HepG2 (cell line): ENCODE measurements at regions of chr19 and their contacts with region 1.

Region 1: GRCh38 chr19:47647804-47648141 is 38.8 kb downstream of the BICRA start:
- DNase-seq: no peak
- ATAC-seq: no peak
- H3K4me3 ChIP-seq: peak overlapping the region in 1 of 3 experiments; percentile 51; a peak in 1 of 6 replicates
- H3K27ac ChIP-seq: peak overlapping the region; percentile 78
- H3K4me1 ChIP-seq: peaks cover 24% of the 10 kb centered on the region
- H3K27me3 ChIP-seq: no peaks in the 10 kb centered on the region
- CTCF ChIP-seq: no peak
- EP300 ChIP-seq: no peak
- POLR2A ChIP-seq: no peak
- RAD21 ChIP-seq: no peak

Region 2: GRCh38 chr19:47549261-47549862 is 98.4 kb before region 1 on chr19:
- CTCF ChIA-PET with region 1: no interaction called
- POLR2A ChIA-PET with region 1: no interaction called
- in situ Hi-C with region 1: no loop called
- intact Hi-C with region 1: no loop called
- DNase-seq: no peak
- ATAC-seq: peak; percentile 28; the same call in 1 of the 3 replicates
- H3K4me3 ChIP-seq: no peak overlapping the region
- H3K27ac ChIP-seq: no peak overlapping the region
- H3K4me1 ChIP-seq: peaks cover 8% of the 10 kb centered on the region
- H3K27me3 ChIP-seq: peaks cover 0 to 10% of the 10 kb centered on the region in 2 experiments; a peak in 2 of 5 replicates
- CTCF ChIP-seq: no peak
- EP300 ChIP-seq: no peak
- POLR2A ChIP-seq: no peak
- RAD21 ChIP-seq: no peak

Region 3: DNA sequence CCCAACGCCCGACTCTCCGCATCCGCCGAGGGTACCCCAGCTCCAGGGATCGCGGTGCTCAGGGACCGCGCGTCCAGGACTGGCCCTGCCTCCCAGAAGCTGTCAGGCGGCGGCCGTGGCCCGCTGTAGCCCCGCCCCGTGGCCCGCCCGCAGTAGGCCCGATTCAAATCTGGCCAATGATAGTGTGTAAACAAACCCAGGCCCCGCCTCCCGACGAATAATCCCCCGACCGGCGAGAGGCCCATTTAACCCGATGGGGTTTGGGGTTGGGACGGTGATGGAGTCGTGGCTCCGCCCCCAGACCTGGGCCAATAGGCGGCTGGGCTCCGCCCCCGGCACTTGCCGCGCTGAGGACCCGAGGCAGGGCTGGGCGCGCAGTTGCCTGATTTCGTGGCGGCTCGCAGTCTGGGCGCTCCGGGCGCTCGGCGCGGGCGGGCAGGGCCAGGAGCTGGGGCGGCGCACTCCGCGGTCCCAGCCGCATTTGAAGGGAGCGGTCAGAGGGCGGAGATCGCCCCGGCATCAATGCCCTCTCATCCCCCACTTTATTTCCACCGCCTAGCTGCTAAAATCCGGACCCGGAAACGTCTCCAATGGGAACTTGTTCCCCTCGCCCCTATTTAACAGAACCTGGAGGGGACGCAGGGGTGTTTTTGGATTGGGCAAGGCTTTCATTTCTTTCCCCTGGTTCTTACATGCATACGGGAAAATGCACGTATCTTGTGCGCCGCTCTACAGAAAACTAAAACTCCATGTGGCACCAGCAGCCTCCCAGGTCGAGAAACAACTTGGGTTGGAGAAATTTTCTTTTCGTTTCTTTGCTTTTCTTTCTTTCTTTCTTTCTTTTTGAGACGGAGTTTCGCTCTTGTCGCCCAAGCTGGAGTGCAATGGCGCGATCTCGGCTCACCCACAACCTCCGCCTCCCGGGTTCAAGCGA is 47.3 kb before region 1 on chr19:
- CTCF ChIA-PET with region 1: no interaction called
- POLR2A ChIA-PET with region 1: interaction called, 13 read pairs
- in situ Hi-C with region 1: no loop called
- intact Hi-C with region 1: no loop called
- DNase-seq: peak; percentile 97
- ATAC-seq: peak; percentile 92
- H3K4me3 ChIP-seq: peak overlapping the region; percentile 65 to 77 (median 68)
- H3K27ac ChIP-seq: peak overlapping the region; percentile 75
- H3K4me1 ChIP-seq: peaks cover 40% of the 10 kb centered on the region
- H3K27me3 ChIP-seq: 0 out of 5 replicates have a peak, but pooled peaks cover 1 to 12% of the 10 kb centered on the region in 2 experiments
- CTCF ChIP-seq: no peak; the same call in 1 of the 2 replicates
- EP300 ChIP-seq: no peak
- POLR2A ChIP-seq: peak; percentile 71 to 82
- RAD21 ChIP-seq: 0 out of 2 replicates have a peak, but pooled peaks have one; percentile 38

Region 4: DNA sequence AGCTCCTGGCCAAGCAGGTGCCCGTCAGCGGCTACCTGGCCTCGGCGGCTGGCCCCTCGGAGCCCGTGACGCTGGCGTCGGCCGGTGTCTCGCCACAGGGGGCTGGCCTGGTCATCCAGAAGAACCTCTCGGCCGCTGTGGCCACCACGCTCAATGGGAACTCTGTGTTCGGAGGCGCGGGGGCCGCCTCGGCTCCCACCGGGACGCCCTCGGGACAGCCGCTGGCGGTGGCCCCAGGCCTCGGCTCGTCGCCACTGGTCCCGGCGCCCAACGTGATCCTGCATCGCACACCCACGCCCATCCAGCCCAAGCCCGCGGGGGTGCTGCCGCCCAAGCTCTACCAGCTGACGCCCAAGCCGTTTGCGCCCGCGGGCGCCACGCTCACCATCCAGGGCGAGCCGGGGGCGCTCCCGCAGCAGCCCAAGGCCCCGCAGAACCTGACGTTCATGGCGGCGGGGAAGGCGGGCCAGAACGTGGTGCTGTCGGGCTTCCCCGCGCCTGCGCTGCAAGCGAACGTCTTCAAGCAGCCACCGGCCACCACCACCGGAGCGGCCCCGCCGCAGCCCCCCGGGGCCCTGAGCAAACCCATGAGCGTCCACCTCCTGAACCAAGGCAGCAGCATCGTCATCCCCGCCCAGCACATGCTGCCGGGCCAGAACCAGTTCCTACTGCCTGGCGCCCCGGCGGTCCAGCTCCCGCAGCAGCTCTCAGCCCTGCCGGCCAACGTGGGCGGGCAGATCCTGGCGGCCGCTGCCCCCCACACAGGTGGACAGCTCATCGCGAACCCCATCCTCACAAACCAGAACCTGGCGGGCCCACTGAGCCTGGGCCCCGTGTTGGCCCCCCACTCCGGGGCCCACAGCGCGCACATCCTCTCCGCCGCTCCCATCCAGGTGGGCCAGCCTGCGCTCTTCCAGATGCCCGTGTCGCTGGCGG is 32.4 kb after region 1 on chr19:
- CTCF ChIA-PET with region 1: no interaction called
- POLR2A ChIA-PET with region 1: no interaction called
- in situ Hi-C with region 1: no loop called
- intact Hi-C with region 1: no loop called
- DNase-seq: no peak
- ATAC-seq: no peak
- H3K4me3 ChIP-seq: no peak overlapping the region
- H3K27ac ChIP-seq: no peak overlapping the region
- H3K4me1 ChIP-seq: no peaks in the 10 kb centered on the region
- H3K27me3 ChIP-seq: no peaks in the 10 kb centered on the region
- CTCF ChIP-seq: no peak
- EP300 ChIP-seq: no peak
- POLR2A ChIP-seq: no peak
- RAD21 ChIP-seq: no peak